Activated naive CD4-positive, alpha-beta T cell treated with anti-CD3 and anti-CD28 coated beads, Interleukin-2, amount 10 ng/mL, durations not matched to agents 7 days and 5 days (primary cell): ENCODE measurements at regions of chr12 and their contacts with region 1.

Region 1: GRCh38 chr12:10190558-10191388 is 11.9 kb downstream of the TMEM52B start:
- DNase-seq: peak; percentile 67
- H3K4me3 Mint-ChIP-seq: no peak overlapping the region
- H3K27ac Mint-ChIP-seq: no peak overlapping the region
- H3K4me1 Mint-ChIP-seq: peaks cover 6% of the 10 kb centered on the region
- H3K27me3 Mint-ChIP-seq: peaks cover 36% of the 10 kb centered on the region

Region 2: GRCh38 chr12:10153271-10154144 is 37.3 kb before region 1 on chr12:
- CTCF ChIA-PET with region 1: interaction called, 29 read pairs
- DNase-seq: peak; percentile 66
- H3K4me3 Mint-ChIP-seq: peak overlapping the region; percentile 85
- H3K27ac Mint-ChIP-seq: peak overlapping the region; percentile 33
- H3K4me1 Mint-ChIP-seq: peaks cover 13% of the 10 kb centered on the region
- H3K27me3 Mint-ChIP-seq: peaks cover 34% of the 10 kb centered on the region

Region 3: DNA sequence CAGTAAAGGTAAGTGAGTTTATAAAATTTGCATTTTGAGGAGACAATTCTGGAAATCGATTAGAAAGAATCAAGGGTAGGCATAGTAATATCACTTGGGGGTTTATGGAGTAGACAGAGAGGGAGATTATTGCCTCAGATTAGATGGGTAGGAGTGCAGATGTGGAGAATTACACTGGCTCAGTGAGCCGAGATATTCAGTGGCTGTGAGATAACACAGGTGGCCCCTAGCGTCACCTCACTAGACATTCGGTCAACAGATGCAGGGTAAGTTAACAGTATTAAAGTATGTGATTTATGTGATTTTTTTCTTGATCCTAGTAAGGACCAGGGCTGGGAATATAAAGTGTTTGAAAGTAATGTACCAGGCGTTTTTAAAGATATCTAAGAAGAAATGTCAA is 77.3 kb after region 1 on chr12:
- CTCF ChIA-PET with region 1: no interaction called
- DNase-seq: no peak
- H3K4me3 Mint-ChIP-seq: no peak overlapping the region
- H3K27ac Mint-ChIP-seq: no peak overlapping the region
- H3K4me1 Mint-ChIP-seq: no peaks in the 10 kb centered on the region
- H3K27me3 Mint-ChIP-seq: no peaks in the 10 kb centered on the region